AG04450 (cell line): ENCODE measurements at regions of chr1 and their contacts with region 1.

Region 1: GRCh38 chr1:165392634-165393571 is 36.4 kb upstream of the LMX1A start:
- DNase-seq: peak; percentile 72
- H3K4me3 ChIP-seq: no peak overlapping the region
- H3K27ac ChIP-seq: no peak overlapping the region
- H3K27me3 ChIP-seq: peaks cover 17% of the 10 kb centered on the region
- CTCF ChIP-seq: peak; percentile 95

Region 2: GRCh38 chr1:164320790-164321731 is 1071.8 kb before region 1 on chr1:
- CTCF ChIA-PET with region 1: no interaction called
- POLR2A ChIA-PET with region 1: no interaction called
- DNase-seq: no peak
- H3K4me3 ChIP-seq: no peak overlapping the region
- H3K27ac ChIP-seq: no peak overlapping the region
- H3K27me3 ChIP-seq: peaks cover 4% of the 10 kb centered on the region
- CTCF ChIP-seq: no peak

Region 3: DNA sequence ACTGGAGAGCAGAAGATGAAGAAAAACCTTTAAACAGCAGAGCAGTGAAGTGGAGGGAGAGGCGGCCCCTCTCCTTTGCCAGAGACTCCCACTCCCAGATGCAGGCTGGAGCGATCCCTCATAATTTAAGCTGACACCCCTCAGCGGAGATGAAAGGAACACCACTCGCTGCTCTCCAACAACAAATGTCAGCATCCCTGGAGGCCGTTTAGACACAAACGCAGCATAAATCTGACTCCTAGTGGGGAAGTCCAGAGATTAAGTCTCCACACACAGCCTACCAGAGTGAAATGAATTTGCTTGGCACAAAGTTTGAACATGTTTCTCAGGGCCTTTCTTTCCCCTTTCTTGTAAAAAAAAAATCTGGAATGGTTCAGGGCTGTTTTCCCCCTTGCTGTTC is 174.2 kb before region 1 on chr1:
- CTCF ChIA-PET with region 1: no interaction called
- POLR2A ChIA-PET with region 1: no interaction called
- DNase-seq: no peak
- H3K4me3 ChIP-seq: no peak overlapping the region
- H3K27ac ChIP-seq: no peak overlapping the region
- H3K27me3 ChIP-seq: no peaks in the 10 kb centered on the region
- CTCF ChIP-seq: no peak

Region 4: GRCh38 chr1:165367375-165367993 is 25.4 kb before region 1 on chr1:
- CTCF ChIA-PET with region 1: interaction called, 10 read pairs
- POLR2A ChIA-PET with region 1: no interaction called
- DNase-seq: peak; percentile 29
- H3K4me3 ChIP-seq: no peak overlapping the region
- H3K27ac ChIP-seq: no peak overlapping the region
- H3K27me3 ChIP-seq: peaks cover 2% of the 10 kb centered on the region
- CTCF ChIP-seq: peak; percentile 89

Region 5: GRCh38 chr1:165403835-165404482 is 11.1 kb after region 1 on chr1:
- CTCF ChIA-PET with region 1: interaction called, 10 read pairs
- POLR2A ChIA-PET with region 1: no interaction called
- DNase-seq: no peak
- H3K4me3 ChIP-seq: no peak overlapping the region
- H3K27ac ChIP-seq: no peak overlapping the region
- H3K27me3 ChIP-seq: peaks cover 5% of the 10 kb centered on the region
- CTCF ChIP-seq: peak; percentile 36

Region 6: DNA sequence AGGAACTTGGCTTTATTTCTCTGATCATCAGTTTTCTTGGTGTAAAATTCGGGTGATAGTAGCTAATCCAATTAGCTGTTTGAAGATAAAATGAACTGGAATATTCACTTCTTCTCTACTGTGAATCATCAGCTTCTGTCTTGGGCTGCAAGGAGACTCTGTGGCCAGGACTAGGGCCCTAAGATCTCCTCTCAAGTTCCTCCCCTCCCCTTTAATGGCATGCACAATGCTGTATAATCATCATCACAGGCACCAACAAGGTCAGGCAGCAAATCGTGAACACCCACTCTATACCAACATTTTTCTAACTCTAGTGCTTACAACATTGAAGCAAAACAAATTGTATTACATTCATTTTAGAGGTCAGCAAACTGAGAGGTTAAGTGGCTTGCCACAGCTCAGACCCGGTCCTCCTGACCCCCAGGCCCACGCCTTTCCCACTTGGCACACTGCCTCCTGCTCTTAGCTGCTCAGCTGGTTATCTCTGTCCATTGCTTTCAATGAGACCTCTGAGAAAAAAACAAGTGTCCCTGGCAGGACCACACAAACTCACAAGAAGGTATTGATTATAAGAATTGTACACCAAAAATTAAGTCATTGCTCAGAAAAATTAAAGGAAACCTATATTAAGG is 182.7 kb after region 1 on chr1:
- CTCF ChIA-PET with region 1: interaction called, 10 read pairs
- POLR2A ChIA-PET with region 1: no interaction called
- DNase-seq: no peak
- H3K4me3 ChIP-seq: no peak overlapping the region
- H3K27ac ChIP-seq: no peak overlapping the region
- H3K27me3 ChIP-seq: no peaks in the 10 kb centered on the region
- CTCF ChIP-seq: no peak

Region 7: DNA sequence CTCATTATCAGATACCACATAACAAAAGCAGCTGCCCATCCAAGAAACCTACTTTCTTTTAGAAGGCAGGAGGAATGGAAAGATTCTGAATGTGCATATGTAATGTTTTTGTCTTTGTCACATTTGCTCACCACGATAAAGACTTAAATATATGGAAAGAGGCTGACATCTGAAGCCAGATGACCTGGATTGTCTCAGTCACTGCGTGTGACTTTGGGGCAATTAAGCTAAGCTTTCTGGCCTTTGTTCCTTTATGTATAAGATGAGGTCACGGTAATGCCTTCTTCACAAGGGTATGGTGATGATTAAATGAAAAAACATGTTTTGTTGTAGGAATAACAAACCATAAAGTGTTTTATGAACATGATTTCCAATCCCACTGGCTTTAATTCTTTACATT is 193.5 kb after region 1 on chr1:
- CTCF ChIA-PET with region 1: interaction called, 223 read pairs
- POLR2A ChIA-PET with region 1: no interaction called
- DNase-seq: no peak
- H3K4me3 ChIP-seq: no peak overlapping the region
- H3K27ac ChIP-seq: no peak overlapping the region
- H3K27me3 ChIP-seq: peaks cover 2% of the 10 kb centered on the region
- CTCF ChIP-seq: no peak

Region 8: GRCh38 chr1:165597883-165598675 is 205.2 kb after region 1 on chr1:
- CTCF ChIA-PET with region 1: interaction called, 223 read pairs
- POLR2A ChIA-PET with region 1: interaction called, 3 read pairs
- DNase-seq: peak; percentile 94
- H3K4me3 ChIP-seq: peak overlapping the region; percentile 69
- H3K27ac ChIP-seq: peak overlapping the region; percentile 92
- H3K27me3 ChIP-seq: peaks cover 14% of the 10 kb centered on the region
- CTCF ChIP-seq: no peak